Gastrocnemius medialis (tissue), 4 donors: ENCODE measurements at regions of chr21 and their contacts with region 1.

Region 1: GRCh38 chr21:46442938-46443337 is 15.8 kb upstream of the DIP2A start:
- DNase-seq: peak in 1 of 2 donors; percentile 13
- ATAC-seq: no peak
- H3K4me3 ChIP-seq: no peak overlapping the region
- H3K27ac ChIP-seq: peak overlapping the region; percentile 39 to 65 (median 56)
- H3K4me1 ChIP-seq: no peaks in the 10 kb centered on the region
- H3K27me3 ChIP-seq: no peaks in the 10 kb centered on the region
- CTCF ChIP-seq: no peak
- POLR2A ChIP-seq: no peak

Region 2: DNA sequence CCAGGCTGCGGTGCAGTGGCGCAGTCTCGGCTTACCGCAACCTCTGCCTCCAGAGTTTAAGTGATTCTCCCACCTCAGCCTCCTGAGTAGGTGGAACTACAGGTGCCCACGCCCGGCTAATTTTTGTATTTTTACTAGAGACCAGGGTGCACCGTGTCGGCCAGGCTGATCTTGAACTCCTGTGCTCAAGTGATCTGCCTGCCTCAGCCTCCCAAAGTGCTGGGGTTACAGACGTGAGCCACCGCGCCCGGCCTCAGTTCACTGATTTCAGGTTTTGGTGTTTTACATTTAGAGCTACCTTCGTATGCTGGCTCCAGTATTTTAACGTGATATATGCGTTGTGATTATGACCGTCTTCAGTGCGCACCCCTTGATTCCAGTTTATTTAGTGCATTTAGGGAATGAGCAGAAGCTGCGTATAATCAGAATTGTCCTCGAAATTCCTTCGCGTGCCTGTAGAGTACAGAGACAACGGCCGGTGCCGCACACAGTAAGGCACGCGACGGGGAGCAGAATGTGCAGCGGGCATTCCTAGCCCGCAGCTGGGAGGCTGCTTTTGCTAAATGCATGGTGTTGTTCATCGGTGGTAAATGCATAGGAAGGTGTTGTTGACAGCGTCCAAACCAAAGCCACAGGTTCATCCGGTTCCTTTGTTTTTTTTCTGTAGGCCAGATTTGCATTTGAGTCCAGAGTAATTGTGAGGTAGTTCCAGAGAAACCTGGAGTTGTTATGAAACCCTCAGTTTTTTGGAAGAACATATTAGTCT is 33.1 kb before region 1 on chr21:
- in situ Hi-C with region 1: no loop called
- intact Hi-C with region 1: loop called (anchors 1 kb)
- DNase-seq: no peak
- ATAC-seq: no peak
- H3K4me3 ChIP-seq: no peak overlapping the region
- H3K27ac ChIP-seq: peak overlapping the region in 2 of 4 donors; percentile 18 to 34
- H3K4me1 ChIP-seq: no peaks in the 10 kb centered on the region
- H3K27me3 ChIP-seq: no peaks in the 10 kb centered on the region
- CTCF ChIP-seq: no peak
- POLR2A ChIP-seq: no peak